CD4-positive, alpha-beta T cell (primary cell): ENCODE measurements at regions of chr2 and their contacts with region 1.

Region 1: GRCh38 chr2:182980115-182980514 is 58.1 kb downstream of the NCKAP1 start:
- DNase-seq: peak in 3 of 14 experiments; percentile 20 to 46 (median 30)
- ATAC-seq: no peak
- H3K4me3 ChIP-seq: no peak overlapping the region
- H3K4me3 Mint-ChIP-seq: no peak overlapping the region
- H3K27ac ChIP-seq: no peak overlapping the region
- H3K27ac Mint-ChIP-seq: no peak overlapping the region
- H3K4me1 ChIP-seq: no peaks in the 10 kb centered on the region
- H3K4me1 Mint-ChIP-seq: no peaks in the 10 kb centered on the region
- H3K27me3 ChIP-seq: no peaks in the 10 kb centered on the region
- H3K27me3 Mint-ChIP-seq: no peaks in the 10 kb centered on the region
- CTCF ChIP-seq: peak; percentile 81

Region 2: GRCh38 chr2:182186132-182186735 is 793.9 kb before region 1 on chr2:
- CTCF ChIA-PET with region 1: no interaction called
- POLR2A ChIA-PET with region 1: no interaction called
- intact Hi-C with region 1: loop called (anchors 1 to 2 kb)
- DNase-seq: peak in 3 of 14 experiments; percentile 34 to 41 (median 34)
- ATAC-seq: no peak
- H3K4me3 ChIP-seq: no peak overlapping the region
- H3K4me3 Mint-ChIP-seq: no peak overlapping the region
- H3K27ac ChIP-seq: no peak overlapping the region
- H3K27ac Mint-ChIP-seq: no peak overlapping the region
- H3K4me1 ChIP-seq: no peaks in the 10 kb centered on the region
- H3K4me1 Mint-ChIP-seq: no peaks in the 10 kb centered on the region
- H3K27me3 ChIP-seq: peaks cover 0 to 3% of the 10 kb centered on the region in 2 experiments
- H3K27me3 Mint-ChIP-seq: peaks cover 15% of the 10 kb centered on the region
- CTCF ChIP-seq: peak; percentile 91

Region 3: GRCh38 chr2:182240862-182241371 is 739.2 kb before region 1 on chr2:
- CTCF ChIA-PET with region 1: no interaction called
- POLR2A ChIA-PET with region 1: no interaction called
- intact Hi-C with region 1: loop called in 1 of 2 experiments (anchors 2 kb)
- DNase-seq: peak in 5 of 14 experiments; percentile 0 to 19 (median 9)
- ATAC-seq: no peak
- H3K4me3 ChIP-seq: no peak overlapping the region
- H3K4me3 Mint-ChIP-seq: no peak overlapping the region
- H3K27ac ChIP-seq: no peak overlapping the region
- H3K27ac Mint-ChIP-seq: no peak overlapping the region
- H3K4me1 ChIP-seq: no peaks in the 10 kb centered on the region
- H3K4me1 Mint-ChIP-seq: no peaks in the 10 kb centered on the region
- H3K27me3 ChIP-seq: no peaks in the 10 kb centered on the region
- H3K27me3 Mint-ChIP-seq: no peaks in the 10 kb centered on the region
- CTCF ChIP-seq: no peak

Region 4: GRCh38 chr2:182666674-182667314 is 313.3 kb before region 1 on chr2:
- CTCF ChIA-PET with region 1: interaction called, 14 read pairs
- POLR2A ChIA-PET with region 1: interaction called, 4 read pairs
- intact Hi-C with region 1: loop called (anchors 1 to 2 kb)
- DNase-seq: peak in 5 of 14 experiments; percentile 3 to 65 (median 43)
- ATAC-seq: peak; percentile 49
- H3K4me3 ChIP-seq: no peak overlapping the region
- H3K4me3 Mint-ChIP-seq: no peak overlapping the region
- H3K27ac ChIP-seq: no peak overlapping the region
- H3K27ac Mint-ChIP-seq: no peak overlapping the region
- H3K4me1 ChIP-seq: no peaks in the 10 kb centered on the region
- H3K4me1 Mint-ChIP-seq: no peaks in the 10 kb centered on the region
- H3K27me3 ChIP-seq: no peaks in the 10 kb centered on the region
- H3K27me3 Mint-ChIP-seq: peaks cover 6% of the 10 kb centered on the region
- CTCF ChIP-seq: peak; percentile 70

Region 5: GRCh38 chr2:182729710-182730339 is 250.3 kb before region 1 on chr2:
- CTCF ChIA-PET with region 1: no interaction called
- POLR2A ChIA-PET with region 1: no interaction called
- intact Hi-C with region 1: no loop called
- DNase-seq: no peak
- ATAC-seq: no peak
- H3K4me3 ChIP-seq: no peak overlapping the region
- H3K4me3 Mint-ChIP-seq: no peak overlapping the region
- H3K27ac ChIP-seq: no peak overlapping the region
- H3K27ac Mint-ChIP-seq: no peak overlapping the region
- H3K4me1 ChIP-seq: no peaks in the 10 kb centered on the region
- H3K4me1 Mint-ChIP-seq: peaks cover 3% of the 10 kb centered on the region
- H3K27me3 ChIP-seq: no peaks in the 10 kb centered on the region
- H3K27me3 Mint-ChIP-seq: no peaks in the 10 kb centered on the region
- CTCF ChIP-seq: no peak

Region 6: DNA sequence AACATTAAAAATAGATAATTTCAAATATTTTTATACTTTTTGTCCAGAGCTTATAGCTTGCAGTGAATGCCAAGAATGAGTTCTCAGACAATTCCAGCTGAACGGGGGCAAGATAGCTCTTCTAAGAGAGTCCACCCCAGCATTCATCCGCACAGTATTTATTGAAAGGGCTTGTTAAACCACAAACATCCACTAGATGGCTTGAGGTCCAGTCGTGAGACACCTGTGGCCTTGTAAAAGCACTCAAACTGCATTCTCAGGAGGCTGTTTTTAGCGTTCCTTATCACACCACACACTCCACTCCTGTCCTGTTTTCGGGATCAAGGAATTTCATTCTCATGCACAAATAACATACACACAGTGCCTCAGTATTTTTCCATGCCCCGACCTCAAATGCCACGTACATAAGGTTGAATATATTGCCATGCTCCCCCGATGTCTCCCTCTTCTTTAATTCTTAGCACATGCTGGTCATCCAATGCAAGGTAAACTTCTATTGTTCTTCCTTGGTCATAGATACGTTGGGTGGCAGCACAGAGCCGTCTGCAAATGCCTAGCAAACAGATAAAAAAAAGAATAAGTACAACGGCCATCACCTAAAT is 216.7 kb before region 1 on chr2:
- CTCF ChIA-PET with region 1: no interaction called
- POLR2A ChIA-PET with region 1: no interaction called
- intact Hi-C with region 1: loop called in 1 of 2 experiments (anchors 10 kb)
- DNase-seq: peak in 2 of 14 experiments; percentile 18 to 20
- ATAC-seq: no peak
- H3K4me3 ChIP-seq: no peak overlapping the region
- H3K4me3 Mint-ChIP-seq: no peak overlapping the region
- H3K27ac ChIP-seq: no peak overlapping the region
- H3K27ac Mint-ChIP-seq: no peak overlapping the region
- H3K4me1 ChIP-seq: no peaks in the 10 kb centered on the region
- H3K4me1 Mint-ChIP-seq: no peaks in the 10 kb centered on the region
- H3K27me3 ChIP-seq: no peaks in the 10 kb centered on the region
- H3K27me3 Mint-ChIP-seq: no peaks in the 10 kb centered on the region
- CTCF ChIP-seq: peak; percentile 31

Region 7: DNA sequence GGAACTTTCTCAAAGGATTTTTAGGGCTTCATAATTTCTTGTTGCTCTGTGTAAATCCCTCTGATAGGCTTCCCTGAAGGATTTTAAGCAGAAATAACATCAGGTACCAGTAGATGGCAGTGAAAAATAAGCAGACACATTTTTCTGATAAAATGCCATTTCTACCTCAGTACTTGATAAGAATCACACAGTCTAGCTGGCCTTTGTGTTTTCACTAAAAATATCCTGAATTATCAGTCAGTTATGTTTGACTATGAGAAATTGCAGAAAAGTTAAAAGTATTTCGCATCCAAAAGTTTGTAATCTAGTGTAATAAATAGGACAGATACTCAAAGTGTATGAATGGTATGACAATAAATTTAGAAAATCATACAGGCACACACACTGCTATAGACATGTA is 195.3 kb before region 1 on chr2:
- CTCF ChIA-PET with region 1: no interaction called
- POLR2A ChIA-PET with region 1: no interaction called
- intact Hi-C with region 1: loop called in 1 of 2 experiments (anchors 10 kb)
- DNase-seq: peak in 1 of 14 experiments; percentile 6
- ATAC-seq: no peak
- H3K4me3 ChIP-seq: no peak overlapping the region
- H3K4me3 Mint-ChIP-seq: no peak overlapping the region
- H3K27ac ChIP-seq: no peak overlapping the region
- H3K27ac Mint-ChIP-seq: no peak overlapping the region
- H3K4me1 ChIP-seq: no peaks in the 10 kb centered on the region
- H3K4me1 Mint-ChIP-seq: no peaks in the 10 kb centered on the region
- H3K27me3 ChIP-seq: no peaks in the 10 kb centered on the region
- H3K27me3 Mint-ChIP-seq: no peaks in the 10 kb centered on the region
- CTCF ChIP-seq: no peak